GM13977 (cell line): ENCODE measurements at regions of chr15 and their contacts with region 1.

Region 1: DNA sequence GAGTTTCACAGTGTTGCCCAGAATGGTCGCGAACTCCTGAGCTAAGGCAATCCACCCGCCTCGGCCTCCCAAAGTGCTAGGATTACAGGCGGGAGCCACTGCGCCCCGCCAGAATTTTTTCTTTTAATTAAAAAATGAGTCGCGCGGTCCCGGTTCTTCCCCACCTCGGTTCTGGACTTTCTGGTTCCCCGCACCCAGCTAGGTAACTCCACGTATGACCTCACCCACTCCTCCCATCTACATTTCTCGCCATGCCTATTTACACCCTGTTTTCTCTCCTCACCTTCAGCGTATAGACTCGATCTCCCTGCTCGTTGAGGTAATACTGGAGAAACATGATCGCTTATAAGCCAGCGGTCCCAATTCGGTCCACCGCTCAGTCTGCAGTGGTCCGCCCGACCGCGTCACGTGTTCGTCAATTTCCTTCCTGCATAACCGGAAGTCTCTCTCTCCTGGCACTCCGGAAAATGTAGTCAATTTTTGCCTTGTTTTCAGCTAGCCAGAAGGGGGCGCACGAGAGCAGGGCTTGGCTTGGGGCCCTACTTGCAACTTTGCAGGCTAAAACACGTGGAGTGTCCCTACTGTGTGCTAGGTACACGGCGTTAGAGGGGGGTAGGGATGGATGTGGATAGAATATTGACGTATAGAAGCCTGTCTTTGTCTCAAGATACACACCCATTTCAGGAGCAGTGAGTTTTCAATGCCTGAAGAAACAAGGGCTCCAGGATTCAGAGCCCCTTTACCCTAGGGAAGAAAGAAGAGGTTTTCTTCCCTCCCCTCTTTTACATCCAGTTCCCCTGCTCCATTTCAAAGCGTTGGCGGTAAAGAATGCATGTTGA is at the starts of genes NOP10 and NUTM1:
- DNase-seq: peak; percentile 77
- CTCF ChIP-seq: peak; percentile 90

Region 2: GRCh38 chr15:34011481-34011880 is 331.5 kb before region 1 on chr15:
- in situ Hi-C with region 1: no loop called
- DNase-seq: no peak
- CTCF ChIP-seq: no peak

Region 3: DNA sequence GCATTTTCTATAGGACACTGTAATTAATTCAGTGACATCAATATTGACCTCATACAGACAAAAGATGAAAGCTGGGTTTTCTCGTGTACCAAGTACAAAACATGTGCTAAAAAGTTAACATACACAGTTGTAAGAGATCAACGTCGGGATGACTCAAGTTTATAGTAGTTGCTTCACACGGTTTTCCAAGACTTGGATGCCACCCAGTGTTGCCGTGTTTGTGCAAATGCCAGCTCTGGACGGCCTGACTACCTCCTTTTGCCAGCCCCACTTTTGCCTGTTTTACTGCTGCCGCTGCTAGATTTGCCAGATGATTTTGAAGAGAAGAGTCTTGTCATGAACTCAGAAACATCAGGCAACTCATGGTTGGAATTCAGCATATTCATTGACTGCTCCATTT is 258.9 kb before region 1 on chr15:
- in situ Hi-C with region 1: loop called (anchors 25 kb)
- DNase-seq: no peak
- CTCF ChIP-seq: no peak